Thyroid gland (tissue), 4 donors: ENCODE measurements at regions of chr1 and their contacts with region 1.

Region 1: GRCh38 chr1:15272009-15272788 is 25.2 kb downstream of the FHAD1 start:
- DNase-seq: peak; percentile 50
- H3K4me3 ChIP-seq: no peak overlapping the region
- H3K27ac ChIP-seq: no peak overlapping the region
- H3K4me1 ChIP-seq: peaks cover 0 to 4% of the 10 kb centered on the region in 2 donors
- H3K27me3 ChIP-seq: no peaks in the 10 kb centered on the region
- CTCF ChIP-seq: peak; percentile 37 to 79 (median 72)
- POLR2A ChIP-seq: no peak

Region 2: DNA sequence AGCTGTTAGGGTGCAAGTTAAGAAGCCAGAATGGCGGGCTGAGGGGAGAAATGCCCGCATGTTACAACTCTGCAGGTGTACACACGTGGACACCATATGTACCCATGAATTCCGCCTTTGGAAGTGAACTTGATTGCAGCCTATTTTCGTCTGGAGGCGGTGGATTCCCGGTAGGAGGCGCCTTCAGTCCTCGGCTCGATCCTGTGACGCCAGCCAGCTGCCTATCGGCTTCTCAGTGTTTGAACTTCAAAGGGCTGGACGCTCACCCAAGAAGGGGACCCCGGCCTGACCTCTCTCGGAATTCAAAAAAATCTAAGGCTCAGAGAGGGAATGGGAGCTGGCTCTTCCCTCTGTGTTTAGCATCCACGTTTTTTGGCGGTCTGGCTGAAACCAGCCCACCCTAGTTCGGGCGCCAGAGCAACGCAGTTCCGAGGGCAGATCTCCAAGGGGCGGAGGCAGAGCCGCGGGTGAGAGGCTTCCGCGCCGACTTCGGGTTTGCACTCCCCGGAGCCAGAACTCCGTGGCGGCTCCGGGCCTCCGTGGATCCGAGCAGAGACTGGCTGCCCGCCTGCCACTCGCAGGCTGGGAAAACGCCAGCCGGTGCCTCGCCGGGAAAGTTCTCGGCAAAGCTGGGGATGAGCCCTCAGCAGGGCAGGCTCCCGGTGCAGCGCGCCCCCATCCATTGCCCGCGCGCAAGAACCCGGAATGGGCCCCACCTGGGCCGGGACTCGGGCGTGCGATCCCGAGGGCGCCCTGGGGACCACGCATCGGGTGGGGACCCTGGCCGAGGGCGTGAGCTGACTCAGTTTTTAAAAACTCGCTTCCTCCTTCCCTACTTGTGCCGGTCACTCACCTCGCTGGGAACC is 119.6 kb before region 1 on chr1:
- intact Hi-C with region 1: loop called (anchors 2 kb)
- DNase-seq: peak; percentile 84 to 85
- H3K4me3 ChIP-seq: peak overlapping the region; percentile 44 to 67 (median 65)
- H3K27ac ChIP-seq: peak overlapping the region; percentile 11 to 87 (median 77)
- H3K4me1 ChIP-seq: peaks cover 0 to 14% of the 10 kb centered on the region in 2 donors
- H3K27me3 ChIP-seq: no peaks in the 10 kb centered on the region
- CTCF ChIP-seq: peak in 5 of 6 experiments; percentile 32 to 70 (median 62)
- POLR2A ChIP-seq: peak in 1 of 2 donors; percentile 51